A673 (cell line): ENCODE measurements at regions of chr11 and their contacts with region 1.

Region 1: GRCh38 chr11:73760679-73761402 is at the start of gene RAB6A:
- DNase-seq: peak; percentile 100
- H3K4me3 ChIP-seq: peak within 1 kb of the TSS; percentile 88
- H3K27ac ChIP-seq: peak within 1 kb of the TSS; percentile 90
- H3K4me1 ChIP-seq: peaks cover 16% of the 10 kb centered on the region
- H3K27me3 ChIP-seq: no peaks in the 10 kb centered on the region
- CTCF ChIP-seq: peak; percentile 35; the same call in 1 of the 2 replicates
- total RNA-seq, gene RAB6A: 104 and 105 TPM in 2 replicates

Region 2: DNA sequence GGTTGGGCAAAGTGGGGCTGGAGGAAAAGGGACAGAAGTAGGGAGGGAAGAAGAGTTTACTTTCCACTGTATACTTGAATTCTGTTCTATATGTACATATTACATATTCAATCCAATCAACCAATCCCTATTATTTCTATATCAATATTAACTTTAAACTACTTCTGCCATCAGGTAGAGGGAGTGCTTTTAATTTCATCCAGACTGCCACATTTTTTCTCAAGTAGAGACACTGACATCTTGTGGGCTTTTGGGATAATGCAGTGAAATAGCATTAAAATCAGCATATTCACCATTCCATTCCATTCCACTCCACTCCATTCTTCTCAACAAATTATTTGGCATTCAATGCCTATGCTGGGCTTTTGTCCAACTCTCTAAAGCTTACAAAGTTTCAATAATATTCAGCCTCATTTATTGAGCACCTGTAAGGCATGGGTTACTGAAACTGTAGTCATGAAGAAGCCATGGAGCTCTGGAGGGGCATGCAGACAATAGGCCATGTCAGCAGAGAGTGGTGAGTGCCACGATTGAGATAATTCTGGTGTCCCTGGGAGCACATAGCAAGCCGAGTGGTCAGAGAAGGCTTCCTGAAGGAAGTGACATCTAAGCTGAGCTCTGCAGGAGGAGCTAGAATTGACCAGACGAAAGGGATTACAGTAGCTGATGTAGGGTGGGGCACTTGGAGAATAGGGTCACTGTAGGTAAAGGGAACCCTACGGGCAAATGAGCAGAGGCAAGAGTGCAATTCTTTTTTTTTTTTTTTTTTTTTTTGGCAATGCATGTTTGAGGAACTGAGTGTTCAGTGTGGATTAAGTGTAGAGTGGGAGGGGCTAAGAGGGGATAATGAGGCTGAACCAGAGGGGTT is 1313.7 kb before region 1 on chr11:
- CTCF ChIA-PET with region 1: no interaction called
- POLR2A ChIA-PET with region 1: no interaction called
- intact Hi-C with region 1: no loop called
- DNase-seq: peak; percentile 82
- H3K4me3 ChIP-seq: no peak overlapping the region
- H3K27ac ChIP-seq: no peak overlapping the region
- H3K4me1 ChIP-seq: no peaks in the 10 kb centered on the region
- H3K27me3 ChIP-seq: no peaks in the 10 kb centered on the region
- CTCF ChIP-seq: peak; percentile 90

Region 3: GRCh38 chr11:73779084-73779902 is 18.5 kb after region 1 on chr11:
- CTCF ChIA-PET with region 1: interaction called, 6 read pairs
- POLR2A ChIA-PET with region 1: interaction called, 4 read pairs
- intact Hi-C with region 1: loop called (anchors 1 kb)
- DNase-seq: peak; percentile 100
- H3K4me3 ChIP-seq: peak overlapping the region; percentile 45
- H3K27ac ChIP-seq: peak overlapping the region; percentile 90
- H3K4me1 ChIP-seq: peaks cover 4% of the 10 kb centered on the region
- H3K27me3 ChIP-seq: no peaks in the 10 kb centered on the region
- CTCF ChIP-seq: no peak

Region 4: DNA sequence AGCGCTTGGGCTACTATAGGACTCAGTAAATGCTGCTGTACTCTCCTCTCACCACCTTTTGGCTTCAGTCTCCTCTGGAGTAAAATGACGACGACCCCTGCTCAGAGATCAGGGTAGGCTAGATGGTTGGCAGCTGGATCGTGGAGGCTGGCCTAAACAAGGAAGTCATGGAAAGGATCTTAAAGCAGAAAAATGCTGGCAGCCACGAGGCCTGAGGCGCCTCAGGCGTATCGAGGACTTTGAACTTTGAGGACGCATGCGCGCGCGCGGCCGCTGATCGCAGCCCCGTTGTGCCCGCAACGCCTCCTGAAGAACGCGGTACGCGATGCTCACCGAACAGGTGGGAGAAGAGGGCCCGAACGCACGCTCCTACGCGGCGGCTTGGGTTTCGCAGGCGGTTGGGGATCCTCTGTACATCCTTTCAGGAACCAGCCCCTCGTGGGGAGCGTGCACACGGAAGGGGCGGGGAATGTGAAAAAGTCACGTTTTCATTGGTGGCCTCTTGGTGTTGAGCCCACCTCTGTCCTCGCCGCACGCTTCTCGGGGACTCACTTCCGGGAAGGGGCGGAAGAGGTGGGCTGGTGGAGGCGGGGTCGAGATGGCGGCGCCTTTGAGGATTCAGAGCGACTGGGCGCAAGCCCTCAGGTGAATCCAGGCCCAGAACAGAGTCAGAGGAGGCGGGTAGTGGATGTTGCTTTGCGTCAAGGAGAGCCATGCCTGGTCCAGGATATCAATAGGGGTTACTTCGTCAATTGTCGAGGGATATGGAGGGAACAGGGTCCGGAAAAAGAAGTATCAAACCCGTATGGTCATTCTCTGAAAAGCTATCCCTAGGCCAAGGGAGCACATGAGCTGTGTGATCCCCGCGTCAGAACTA is 115.8 kb after region 1 on chr11 and contains the starts of genes COA4 and PAAF1:
- CTCF ChIA-PET with region 1: no interaction called
- POLR2A ChIA-PET with region 1: no interaction called
- intact Hi-C with region 1: loop called (anchors 1 kb)
- DNase-seq: peak; percentile 100
- H3K4me3 ChIP-seq: peak within 1 kb of the TSS; percentile 66
- H3K27ac ChIP-seq: peak within 1 kb of the TSS; percentile 83
- H3K4me1 ChIP-seq: peaks cover 16% of the 10 kb centered on the region
- H3K27me3 ChIP-seq: no peaks in the 10 kb centered on the region
- CTCF ChIP-seq: no peak
- total RNA-seq, gene COA4: 112 and 113 TPM in 2 replicates
- total RNA-seq, gene PAAF1: 20.3 and 25.0 TPM in 2 replicates